Vagina (tissue), 2 donors: ENCODE measurements at regions of chr6 and their contacts with region 1.

Region 1: DNA sequence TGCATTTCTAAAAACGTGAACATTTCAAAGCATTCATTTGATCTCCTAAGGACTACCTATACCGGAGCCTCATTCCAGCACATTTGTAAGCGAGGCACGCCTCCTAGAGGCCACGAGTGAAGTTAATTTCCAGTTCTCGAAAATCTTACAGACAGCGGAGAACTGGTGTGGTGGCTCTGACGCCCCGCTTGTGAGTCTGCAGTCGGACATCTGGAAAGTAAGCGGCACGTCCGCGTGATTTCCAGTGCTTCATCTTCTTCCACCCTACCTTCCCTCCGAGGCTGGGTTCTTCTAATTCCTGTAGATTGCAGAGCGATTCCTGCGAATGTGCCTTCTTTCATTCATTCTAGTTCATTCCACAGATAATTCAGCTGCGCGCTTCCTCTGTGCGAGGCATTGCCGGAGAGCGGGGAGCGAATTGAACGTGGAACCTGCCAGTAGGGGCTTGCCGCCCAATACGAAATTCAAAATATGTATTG is 810 bp upstream of the PRIM2 start:
- DNase-seq: peak in 1 of 2 donors; percentile 92
- H3K4me3 ChIP-seq: peak overlapping the region; percentile 53 to 68
- H3K27ac ChIP-seq: peak overlapping the region; percentile 79
- H3K4me1 ChIP-seq: peaks cover 38% of the 10 kb centered on the region
- H3K27me3 ChIP-seq: no peaks in the 10 kb centered on the region
- CTCF ChIP-seq: peak; percentile 44 to 87 (median 77)
- POLR2A ChIP-seq: no peak

Region 2: DNA sequence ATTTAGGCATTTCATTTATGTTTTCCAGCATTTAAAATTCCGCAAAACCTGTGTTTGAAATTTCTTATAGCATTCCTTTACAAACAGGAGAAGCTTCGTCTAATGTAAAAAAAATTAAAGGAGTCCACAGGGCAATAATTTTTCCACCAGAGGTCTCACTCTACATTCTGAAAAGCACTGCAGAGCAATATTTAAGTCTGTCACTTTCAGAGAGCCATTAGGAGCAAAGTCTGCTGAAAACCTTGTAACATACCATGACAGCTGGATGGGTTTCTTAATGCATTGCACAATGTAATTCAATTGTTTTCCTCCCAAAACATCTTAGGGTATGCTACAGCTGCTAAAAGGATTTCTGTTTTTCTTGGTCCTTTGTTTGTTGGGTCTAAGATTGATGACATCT is 126.5 kb before region 1 on chr6:
- intact Hi-C with region 1: loop called (anchors 10 kb)
- DNase-seq: no peak
- H3K4me3 ChIP-seq: no peak overlapping the region
- H3K27ac ChIP-seq: no peak overlapping the region
- H3K4me1 ChIP-seq: no peaks in the 10 kb centered on the region
- H3K27me3 ChIP-seq: no peaks in the 10 kb centered on the region
- CTCF ChIP-seq: peak in 1 of 3 experiments; percentile 23
- POLR2A ChIP-seq: no peak

Region 3: DNA sequence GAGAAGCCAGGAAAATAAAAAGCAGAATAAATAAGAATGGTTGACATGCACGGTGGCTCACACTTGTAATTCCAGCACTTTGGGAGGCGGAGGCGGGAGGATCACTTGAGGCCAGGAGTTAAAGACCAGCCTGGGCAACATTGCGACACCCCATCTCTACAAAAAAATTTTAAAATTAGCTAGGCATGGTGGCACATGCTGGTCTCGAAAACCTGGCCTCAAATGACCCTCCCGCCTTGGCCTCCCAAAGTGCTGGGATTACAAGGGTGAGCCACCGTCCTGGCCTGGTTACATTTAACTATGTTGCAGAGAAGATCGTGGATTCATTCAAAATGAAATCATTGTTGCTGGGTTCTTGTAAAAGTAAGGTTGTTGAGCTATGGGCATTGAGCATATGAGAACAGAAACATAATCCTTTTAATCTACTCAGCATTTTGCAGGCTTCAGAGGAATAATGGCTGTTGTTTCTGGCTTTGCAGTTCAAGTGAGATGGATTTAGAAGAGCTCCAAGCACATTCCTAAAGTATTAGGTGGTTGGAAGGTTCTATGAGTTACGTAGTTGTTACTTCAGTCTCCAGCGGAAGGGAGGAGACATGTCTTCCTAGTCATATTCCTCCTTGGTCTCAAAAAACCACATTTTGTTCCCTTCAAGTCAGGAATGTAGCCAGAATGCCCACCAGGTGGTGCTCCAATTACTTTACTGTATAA is 48.9 kb before region 1 on chr6:
- intact Hi-C with region 1: loop called (anchors 10 kb)
- DNase-seq: no peak
- H3K4me3 ChIP-seq: no peak overlapping the region
- H3K27ac ChIP-seq: peak overlapping the region; percentile 49
- H3K4me1 ChIP-seq: peaks cover 6% of the 10 kb centered on the region
- H3K27me3 ChIP-seq: no peaks in the 10 kb centered on the region
- CTCF ChIP-seq: peak in 1 of 3 experiments; percentile 20
- POLR2A ChIP-seq: no peak